ENCODE measurements at regions of chr11 and their contacts with region 1.

Region 1: DNA sequence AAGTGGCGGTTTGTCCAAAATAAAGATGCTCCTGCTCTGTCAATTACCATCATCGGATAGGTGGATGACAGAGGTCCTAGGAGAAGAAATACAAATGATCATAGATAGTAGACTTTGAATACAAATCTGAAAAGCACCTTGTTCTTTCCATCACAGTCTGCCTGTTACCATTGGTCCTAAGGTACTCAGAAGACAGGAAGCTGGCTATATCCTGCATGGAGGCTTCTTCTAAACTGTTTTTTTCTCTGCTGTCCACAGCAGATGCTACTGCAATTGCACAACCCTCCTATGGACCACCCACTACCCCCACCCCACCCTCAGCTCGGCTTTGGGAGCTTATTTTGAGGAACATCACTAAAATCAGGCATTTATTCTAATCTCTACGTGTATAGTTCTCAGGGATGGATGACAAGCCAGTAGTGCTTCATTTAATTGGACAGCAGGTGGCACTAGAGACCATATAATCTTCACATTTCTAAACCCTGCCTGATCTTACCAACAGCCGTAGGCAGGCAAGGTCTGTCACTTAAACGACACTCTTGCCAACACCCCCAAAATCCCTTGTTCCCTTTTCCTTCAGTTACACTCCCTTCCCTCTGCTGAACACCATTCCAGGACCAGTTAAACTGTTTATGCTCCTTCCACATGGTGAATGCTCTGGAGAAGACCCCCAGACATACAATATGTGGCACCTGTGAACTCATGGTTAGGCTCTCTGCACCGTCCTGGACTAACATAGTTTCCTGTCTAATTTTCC is 6.6 kb upstream of the PTS start:
- DNase-seq: peak; percentile 86
- H3K4me3 Mint-ChIP-seq: no peak overlapping the region
- H3K27ac Mint-ChIP-seq: no peak overlapping the region
- H3K4me1 Mint-ChIP-seq: peaks cover 10% of the 10 kb centered on the region
- H3K27me3 Mint-ChIP-seq: peaks cover 8% of the 10 kb centered on the region

Region 2: DNA sequence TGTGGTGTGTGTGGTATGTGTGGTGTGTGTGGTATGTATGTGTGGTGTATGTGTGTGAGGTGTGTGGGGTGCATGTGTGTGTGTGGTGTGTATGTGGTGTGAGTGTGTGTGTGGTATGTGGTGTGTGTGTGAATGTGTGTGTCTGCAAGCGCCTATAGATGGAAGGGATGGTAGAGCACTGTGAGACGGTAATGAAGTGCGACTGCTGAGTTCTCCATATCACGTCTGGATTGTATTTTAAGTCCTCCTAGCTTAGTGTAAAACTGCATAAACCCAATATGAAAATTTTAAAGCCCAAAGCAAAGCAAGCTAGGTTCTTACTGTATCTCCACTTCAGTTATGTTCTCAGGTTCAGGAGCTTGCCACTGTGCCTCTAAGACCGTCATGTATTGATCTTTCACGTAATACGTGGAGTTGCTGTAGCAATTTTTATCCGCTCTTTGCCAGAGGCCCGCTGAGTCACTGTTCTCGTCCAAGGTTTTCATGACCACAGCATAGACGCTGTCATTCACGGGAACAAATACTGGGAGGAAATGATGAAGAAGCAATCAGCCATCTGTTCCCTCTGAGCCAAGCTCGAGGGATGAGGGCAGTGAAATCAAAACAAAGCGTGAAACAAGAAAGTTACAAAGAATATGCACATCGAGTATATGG is 35.5 kb after region 1 on chr11:
- intact Hi-C with region 1: loop called (anchors 1 kb)
- DNase-seq: no peak
- H3K4me3 Mint-ChIP-seq: no peak overlapping the region
- H3K27ac Mint-ChIP-seq: no peak overlapping the region
- H3K4me1 Mint-ChIP-seq: no peaks in the 10 kb centered on the region
- H3K27me3 Mint-ChIP-seq: no peaks in the 10 kb centered on the region

Region 3: GRCh38 chr11:112345708-112346107 is 126.1 kb after region 1 on chr11:
- intact Hi-C with region 1: no loop called
- DNase-seq: no peak
- H3K4me3 Mint-ChIP-seq: no peak overlapping the region
- H3K27ac Mint-ChIP-seq: no peak overlapping the region
- H3K4me1 Mint-ChIP-seq: no peaks in the 10 kb centered on the region
- H3K27me3 Mint-ChIP-seq: no peaks in the 10 kb centered on the region

Region 4: DNA sequence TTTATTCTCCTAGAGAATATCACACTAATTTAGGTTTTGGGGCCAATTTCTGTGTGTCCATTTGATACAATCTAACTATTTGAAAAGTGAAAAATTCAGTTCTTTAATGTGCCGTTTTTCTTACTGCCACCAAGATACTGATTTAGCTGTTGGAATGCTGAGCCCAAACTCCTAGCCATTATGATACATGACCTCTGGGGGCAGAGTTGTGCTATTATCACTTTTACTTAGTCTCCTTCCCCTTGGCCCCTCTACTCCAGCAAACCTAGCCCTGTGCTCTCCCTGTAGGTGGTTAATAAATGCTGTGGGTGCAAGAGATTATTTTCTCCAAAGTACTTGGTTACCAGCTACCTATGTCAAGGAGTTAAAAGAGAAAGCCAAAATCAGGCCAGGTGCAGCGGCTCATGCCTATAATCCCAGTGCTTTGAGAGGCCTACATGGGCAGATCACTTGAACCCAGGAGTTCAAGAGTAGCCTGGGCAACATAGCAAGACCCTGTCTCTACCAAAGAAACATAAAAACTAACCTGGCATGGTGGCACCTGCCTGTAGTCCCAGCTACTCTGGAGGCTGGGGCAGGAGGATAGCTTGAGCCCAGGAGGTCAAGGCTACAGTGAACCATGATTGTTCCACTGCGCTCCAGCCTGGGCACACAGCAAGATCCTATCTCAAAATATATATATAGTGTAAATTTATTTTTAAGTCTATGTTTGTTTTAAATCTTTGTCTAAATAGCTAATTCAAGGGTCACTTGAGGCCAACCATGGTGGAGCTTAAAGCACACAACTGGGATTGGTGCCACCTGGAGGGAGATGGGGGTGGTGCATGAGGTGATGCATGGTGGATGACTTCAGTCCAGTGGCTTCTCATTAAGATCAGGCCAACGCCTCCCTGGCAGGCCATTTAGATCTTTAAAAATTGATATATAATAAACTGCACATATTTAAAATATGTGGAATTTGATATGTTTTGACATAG is 234.2 kb after region 1 on chr11:
- intact Hi-C with region 1: loop called (anchors 10 kb)
- DNase-seq: peak; percentile 74
- H3K4me3 Mint-ChIP-seq: no peak overlapping the region
- H3K27ac Mint-ChIP-seq: no peak overlapping the region
- H3K4me1 Mint-ChIP-seq: peaks cover 5% of the 10 kb centered on the region
- H3K27me3 Mint-ChIP-seq: no peaks in the 10 kb centered on the region

Region 5: DNA sequence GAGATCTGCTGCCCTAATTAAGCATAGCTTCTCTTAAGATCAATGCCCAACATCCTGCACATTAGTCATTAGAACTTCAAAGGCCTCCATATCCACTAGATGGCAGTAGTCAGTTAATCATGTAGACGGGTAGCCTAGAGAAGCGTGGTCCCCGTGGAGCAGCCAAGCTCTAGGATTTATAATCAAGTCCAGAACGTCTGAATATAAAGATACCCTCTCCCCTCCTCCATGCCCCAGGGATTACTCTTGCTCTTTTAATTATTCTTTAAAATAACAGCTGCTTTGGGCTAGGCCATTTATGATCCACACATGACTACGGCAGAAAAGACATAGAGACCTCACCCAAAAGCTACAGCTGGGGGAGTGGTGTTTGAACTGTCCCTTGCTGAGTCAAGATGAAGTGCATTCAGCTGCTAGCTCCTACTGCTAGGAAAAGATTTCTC is 368.6 kb after region 1 on chr11:
- intact Hi-C with region 1: loop called (anchors 1 kb)
- DNase-seq: peak; percentile 80
- H3K4me3 Mint-ChIP-seq: no peak overlapping the region
- H3K27ac Mint-ChIP-seq: no peak overlapping the region
- H3K4me1 Mint-ChIP-seq: peaks cover 2% of the 10 kb centered on the region
- H3K27me3 Mint-ChIP-seq: peaks cover 3% of the 10 kb centered on the region

Region 6: DNA sequence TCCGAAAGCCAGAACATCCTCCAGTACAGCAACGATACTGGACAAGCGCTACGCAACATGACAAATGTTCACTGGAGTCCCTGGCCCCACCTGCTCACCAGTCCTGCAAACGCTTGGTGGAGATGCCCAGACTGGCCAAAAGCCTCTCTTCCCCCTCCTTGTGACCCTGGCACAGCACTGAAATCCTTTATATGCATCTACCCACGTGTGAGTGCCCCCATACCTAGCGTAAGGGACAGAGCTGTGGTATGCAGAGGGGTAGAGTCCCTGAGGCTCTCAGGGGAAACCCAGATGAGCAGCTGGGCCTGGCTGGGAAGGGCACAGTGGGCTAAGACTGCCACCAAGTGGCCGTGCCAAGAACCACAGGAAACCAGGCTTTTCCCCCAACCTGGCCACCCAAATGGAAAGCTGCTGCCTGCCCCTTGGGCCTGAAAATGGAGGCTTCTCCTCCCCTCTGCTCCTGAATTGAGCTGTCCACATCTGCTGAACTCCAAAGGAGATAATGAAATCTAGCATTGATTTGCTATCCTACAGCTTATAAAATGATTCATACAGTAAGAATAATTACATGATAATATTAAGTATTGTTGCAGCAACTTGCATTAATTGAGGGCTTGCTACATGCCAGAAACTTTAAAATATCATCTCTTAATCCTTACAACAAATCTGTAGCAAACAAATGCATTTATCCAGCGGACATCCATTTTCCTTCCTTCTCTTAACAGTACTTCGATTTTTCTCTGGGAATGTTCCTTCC is 1070.0 kb after region 1 on chr11:
- intact Hi-C with region 1: loop called (anchors 2 kb)
- DNase-seq: peak; percentile 90
- H3K4me3 Mint-ChIP-seq: no peak overlapping the region
- H3K27ac Mint-ChIP-seq: no peak overlapping the region
- H3K4me1 Mint-ChIP-seq: no peaks in the 10 kb centered on the region
- H3K27me3 Mint-ChIP-seq: peaks cover 5% of the 10 kb centered on the region